ENCODE measurements at regions of chr5 and their contacts with region 1.

Region 1: DNA sequence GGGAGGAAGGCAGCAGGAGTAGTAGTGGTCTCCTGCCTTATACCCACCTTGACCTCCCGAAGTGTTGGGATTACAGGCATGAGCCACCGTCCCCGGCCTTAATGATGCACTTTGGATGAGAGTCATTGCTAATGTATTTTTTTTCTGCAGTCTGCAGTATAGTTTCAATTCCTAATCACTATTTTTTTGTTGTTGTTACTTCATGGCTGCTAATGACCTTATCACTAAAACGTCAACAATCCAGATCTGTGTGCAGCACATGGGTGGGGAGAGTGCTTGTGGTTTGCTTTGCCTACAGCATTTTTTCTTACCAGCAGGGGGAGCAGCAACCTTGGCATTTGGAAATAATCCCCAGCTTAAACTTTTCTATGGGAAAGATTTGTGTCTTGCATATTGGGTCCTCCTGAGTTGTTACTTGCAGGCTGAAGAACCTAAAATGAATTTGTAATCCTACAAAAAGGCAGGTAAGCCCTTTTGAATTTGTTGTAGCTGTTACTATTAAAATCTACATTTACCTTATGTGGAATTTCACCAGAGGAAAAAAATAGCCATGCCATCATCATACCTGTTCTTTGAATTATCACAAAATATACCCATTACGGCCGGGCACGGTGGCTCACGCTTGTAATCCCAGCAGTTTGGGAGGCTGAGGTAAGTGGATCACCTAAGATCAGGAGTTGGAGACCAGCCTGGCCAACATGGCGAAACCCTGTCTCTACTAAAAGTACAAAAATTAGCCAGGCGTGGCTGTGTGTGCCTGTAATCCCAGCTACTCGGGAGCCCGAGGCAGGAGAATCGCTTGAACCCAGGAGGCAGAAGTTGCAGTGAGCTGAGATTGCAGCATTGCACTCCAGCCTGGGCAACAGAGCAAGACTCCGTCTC is 6.3 kb upstream of the MED7 start:
- DNase-seq: peak; percentile 95
- H3K4me3 Mint-ChIP-seq: peak overlapping the region; percentile 37
- H3K27ac Mint-ChIP-seq: peak overlapping the region; percentile 83
- H3K4me1 Mint-ChIP-seq: peaks cover 46% of the 10 kb centered on the region
- H3K27me3 Mint-ChIP-seq: no peaks in the 10 kb centered on the region

Region 2: GRCh38 chr5:157004893-157005551 is 144.0 kb before region 1 on chr5:
- intact Hi-C with region 1: no loop called
- DNase-seq: no peak
- H3K4me3 Mint-ChIP-seq: no peak overlapping the region
- H3K27ac Mint-ChIP-seq: peak overlapping the region; percentile 76
- H3K4me1 Mint-ChIP-seq: peaks cover 21% of the 10 kb centered on the region
- H3K27me3 Mint-ChIP-seq: no peaks in the 10 kb centered on the region

Region 3: GRCh38 chr5:157172403-157172802 is 23.4 kb after region 1 on chr5:
- intact Hi-C with region 1: loop called (anchors 1 kb)
- DNase-seq: peak; percentile 95
- H3K4me3 Mint-ChIP-seq: peak overlapping the region; percentile 81
- H3K27ac Mint-ChIP-seq: peak overlapping the region; percentile 96
- H3K4me1 Mint-ChIP-seq: peaks cover 76% of the 10 kb centered on the region
- H3K27me3 Mint-ChIP-seq: no peaks in the 10 kb centered on the region

Region 4: DNA sequence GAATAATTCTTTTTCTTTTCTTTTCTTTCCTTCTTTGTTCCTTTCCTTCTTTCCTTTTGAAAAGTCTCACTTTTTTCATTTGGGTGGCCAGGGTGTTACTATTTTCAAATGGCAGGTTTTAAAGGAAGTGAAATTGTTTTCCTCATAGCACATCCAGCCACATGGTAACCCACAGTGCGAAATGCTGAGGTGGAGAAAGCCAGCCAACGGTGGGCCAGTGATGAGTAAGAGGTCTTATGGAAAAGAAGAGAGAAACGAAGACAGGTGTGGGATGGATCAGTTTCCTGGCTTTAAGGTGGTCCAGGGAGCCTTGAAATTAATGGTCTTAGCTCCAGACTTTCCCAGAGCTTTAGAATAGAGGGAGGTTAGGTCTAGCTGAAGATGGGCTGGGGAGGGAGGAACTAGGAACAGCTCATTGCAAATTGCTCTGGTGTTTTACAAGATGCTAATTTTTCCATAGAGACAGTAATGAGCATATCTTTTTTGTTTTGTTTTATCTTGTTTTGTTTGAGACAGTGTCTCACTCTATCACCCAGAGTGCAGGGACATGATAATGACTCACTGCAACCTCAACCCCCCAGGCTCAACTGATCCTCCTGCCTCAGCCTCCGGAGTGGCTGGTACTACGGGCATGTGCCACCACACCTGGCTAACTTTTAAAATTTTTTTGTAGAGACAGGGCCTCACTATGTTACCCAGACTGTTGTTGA is 49.5 kb after region 1 on chr5:
- intact Hi-C with region 1: loop called (anchors 1 kb)
- DNase-seq: peak; percentile 82
- H3K4me3 Mint-ChIP-seq: peak overlapping the region; percentile 69
- H3K27ac Mint-ChIP-seq: peak overlapping the region; percentile 96
- H3K4me1 Mint-ChIP-seq: peaks cover 80% of the 10 kb centered on the region
- H3K27me3 Mint-ChIP-seq: no peaks in the 10 kb centered on the region

Region 5: GRCh38 chr5:157271740-157272271 is 122.8 kb after region 1 on chr5:
- intact Hi-C with region 1: loop called (anchors 2 kb)
- DNase-seq: peak; percentile 95
- H3K4me3 Mint-ChIP-seq: peak overlapping the region; percentile 96
- H3K27ac Mint-ChIP-seq: peak overlapping the region; percentile 99
- H3K4me1 Mint-ChIP-seq: peaks cover 81% of the 10 kb centered on the region
- H3K27me3 Mint-ChIP-seq: no peaks in the 10 kb centered on the region

Region 6: DNA sequence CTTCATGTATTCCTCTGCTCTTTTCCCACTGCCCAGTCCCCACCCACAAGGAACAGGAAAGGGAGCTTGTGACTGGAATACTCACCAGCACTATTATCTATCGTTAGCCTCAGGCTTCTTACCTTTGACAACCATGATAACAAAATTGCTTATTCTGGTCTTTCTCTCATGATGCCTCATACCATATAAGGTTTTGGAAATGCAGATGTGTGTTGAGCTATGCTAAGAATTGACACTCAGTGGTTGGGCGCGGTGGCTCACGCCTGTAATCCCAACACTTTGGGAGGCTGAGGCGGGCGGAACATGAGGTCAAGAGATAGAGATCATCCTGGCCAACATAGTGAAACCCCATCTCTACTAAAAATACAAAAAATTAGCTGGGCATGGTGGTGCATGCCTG is 477.9 kb after region 1 on chr5:
- intact Hi-C with region 1: no loop called
- DNase-seq: peak; percentile 42
- H3K4me3 Mint-ChIP-seq: no peak overlapping the region
- H3K27ac Mint-ChIP-seq: no peak overlapping the region
- H3K4me1 Mint-ChIP-seq: peaks cover 7% of the 10 kb centered on the region
- H3K27me3 Mint-ChIP-seq: peaks cover 2% of the 10 kb centered on the region